ENCODE measurements at regions of chr9 and their contacts with region 1.

Region 1: GRCh38 chr9:101592788-101593187 is 2.0 kb downstream of the PPP3R2 start:
- DNase-seq: no peak
- ATAC-seq: no peak
- H3K4me3 ChIP-seq: no peak overlapping the region
- H3K27ac ChIP-seq: no peak overlapping the region
- H3K4me1 ChIP-seq: no peaks in the 10 kb centered on the region
- H3K27me3 ChIP-seq: peaks cover 0 to 7% (median 0%) of the 10 kb centered on the region in 7 donors
- CTCF ChIP-seq: no peak

Region 2: GRCh38 chr9:101543098-101543735 is 49.6 kb before region 1 on chr9:
- intact Hi-C with region 1: no loop called
- DNase-seq: no peak
- ATAC-seq: no peak
- H3K4me3 ChIP-seq: no peak overlapping the region
- H3K27ac ChIP-seq: no peak overlapping the region
- H3K4me1 ChIP-seq: peaks cover 0 to 7% (median 0%) of the 10 kb centered on the region in 9 donors
- H3K27me3 ChIP-seq: no peaks in the 10 kb centered on the region
- CTCF ChIP-seq: no peak

Region 3: GRCh38 chr9:101650142-101650541 is 57.4 kb after region 1 on chr9:
- intact Hi-C with region 1: loop called in 1 of 10 experiments (anchors 10 kb)
- DNase-seq: no peak
- ATAC-seq: peak in 1 of 8 donors; percentile 27
- H3K4me3 ChIP-seq: no peak overlapping the region
- H3K27ac ChIP-seq: no peak overlapping the region
- H3K4me1 ChIP-seq: no peaks in the 10 kb centered on the region
- H3K27me3 ChIP-seq: no peaks in the 10 kb centered on the region
- CTCF ChIP-seq: no peak

Region 4: DNA sequence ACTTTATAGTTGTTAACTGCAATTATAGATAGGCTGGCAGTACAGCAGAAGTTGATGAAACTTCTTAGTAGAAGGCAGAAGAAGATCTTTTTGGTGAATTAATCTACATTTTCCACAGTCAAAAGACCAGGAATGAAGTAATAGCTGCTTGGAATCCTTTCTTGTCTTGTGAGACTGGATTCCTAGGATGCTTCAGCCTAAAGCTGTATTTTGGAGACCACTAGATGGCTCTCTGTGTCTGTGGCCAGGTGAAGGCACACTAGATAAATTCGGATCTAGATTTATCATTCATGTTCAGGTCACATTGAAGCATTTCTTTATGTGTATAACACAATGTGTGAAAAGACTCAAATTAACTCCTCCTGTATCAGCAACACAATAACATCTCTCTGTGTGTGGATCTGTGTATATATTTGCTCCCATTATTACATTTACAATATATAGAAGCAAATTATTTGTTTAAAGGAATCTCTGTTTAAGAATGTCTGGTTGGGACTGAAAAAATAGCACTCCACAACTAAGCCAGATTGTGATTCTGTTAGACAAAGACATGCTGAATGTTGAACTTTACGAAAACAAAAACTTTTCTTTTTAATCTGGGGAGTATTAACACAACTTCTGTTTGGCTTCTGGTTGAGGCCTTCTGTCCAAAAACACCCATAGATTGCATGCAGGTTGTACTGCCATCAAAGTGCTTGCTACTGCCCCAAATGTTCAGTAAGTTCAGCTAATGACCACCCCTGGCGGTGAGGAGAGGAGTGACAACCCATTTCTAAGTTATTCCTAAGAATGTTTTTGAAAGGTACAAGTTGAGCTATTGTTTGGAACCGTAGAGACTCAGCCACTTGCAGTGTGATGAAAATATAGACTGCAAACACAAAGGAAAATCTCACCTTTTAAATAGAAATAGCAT is 135.1 kb after region 1 on chr9:
- intact Hi-C with region 1: no loop called
- DNase-seq: no peak
- ATAC-seq: no peak
- H3K4me3 ChIP-seq: no peak overlapping the region
- H3K27ac ChIP-seq: no peak overlapping the region
- H3K4me1 ChIP-seq: no peaks in the 10 kb centered on the region
- H3K27me3 ChIP-seq: peaks cover 0 to 9% (median 0%) of the 10 kb centered on the region in 7 donors
- CTCF ChIP-seq: peak; percentile 18 to 49 (median 46)